Posterior vena cava (tissue), 2 donors: ENCODE measurements at regions of chr20 and their contacts with region 1.

Region 1: GRCh38 chr20:50478162-50479036 is 31.8 kb upstream of the PTPN1 start:
- DNase-seq: peak; percentile 92

Region 2: DNA sequence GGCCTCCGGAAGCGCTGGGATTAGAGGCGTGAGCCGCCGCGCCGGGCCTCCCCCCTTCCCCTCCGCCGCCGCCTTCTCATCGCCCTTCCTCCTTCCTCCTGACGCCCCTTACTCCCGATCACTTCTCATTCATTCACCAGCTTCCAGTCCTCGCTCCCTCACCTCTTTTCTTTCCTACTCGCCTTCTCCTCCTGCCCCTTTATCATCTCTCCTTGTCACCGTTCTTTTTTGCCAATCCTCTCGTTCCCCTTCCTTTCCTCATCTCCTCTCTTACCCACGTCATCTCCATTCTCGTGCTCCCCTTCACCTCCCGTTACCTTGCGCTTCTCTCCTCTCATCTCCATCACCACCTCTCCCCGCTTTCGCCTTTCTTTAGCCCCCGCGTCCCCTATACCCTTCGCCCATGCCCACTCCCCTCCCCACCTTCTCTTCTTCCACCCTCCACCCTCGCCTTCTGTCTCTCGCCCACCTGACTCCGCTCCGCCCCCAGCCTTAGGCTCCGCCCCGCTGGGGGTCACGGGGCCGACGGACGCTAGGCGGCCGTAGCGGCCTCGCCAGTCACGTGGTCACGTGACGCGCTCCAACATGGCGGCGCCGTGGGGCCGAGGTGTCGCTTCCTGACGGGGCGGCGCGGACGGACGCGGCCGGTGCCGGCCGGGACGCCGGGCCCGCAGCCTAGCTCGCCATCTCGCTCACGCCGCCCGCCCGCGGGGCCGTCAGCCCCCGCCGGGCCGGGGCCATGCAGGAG is 1557.1 kb before region 1 on chr20 and contains the start of gene ARFGEF2:
- intact Hi-C with region 1: loop called in 1 of 2 experiments (anchors 10 kb)
- DNase-seq: peak; percentile 97
- total RNA-seq, gene ARFGEF2: 23.2 to 27.5 TPM

Region 3: GRCh38 chr20:49508435-49509199 is 969.8 kb before region 1 on chr20:
- intact Hi-C with region 1: no loop called
- DNase-seq: no peak

Region 4: GRCh38 chr20:50509935-50510705 is 31.7 kb after region 1 on chr20 and contains the start of gene PTPN1:
- intact Hi-C with region 1: loop called in 1 of 2 experiments (anchors 1 kb)
- DNase-seq: peak; percentile 100
- total RNA-seq, gene PTPN1: 23.5 to 43.6 TPM